Activated naive CD4-positive, alpha-beta T cell treated with anti-CD3 and anti-CD28 coated beads for 36 hours (primary cell): ENCODE measurements at regions of chr4 and their contacts with region 1.

Region 1: DNA sequence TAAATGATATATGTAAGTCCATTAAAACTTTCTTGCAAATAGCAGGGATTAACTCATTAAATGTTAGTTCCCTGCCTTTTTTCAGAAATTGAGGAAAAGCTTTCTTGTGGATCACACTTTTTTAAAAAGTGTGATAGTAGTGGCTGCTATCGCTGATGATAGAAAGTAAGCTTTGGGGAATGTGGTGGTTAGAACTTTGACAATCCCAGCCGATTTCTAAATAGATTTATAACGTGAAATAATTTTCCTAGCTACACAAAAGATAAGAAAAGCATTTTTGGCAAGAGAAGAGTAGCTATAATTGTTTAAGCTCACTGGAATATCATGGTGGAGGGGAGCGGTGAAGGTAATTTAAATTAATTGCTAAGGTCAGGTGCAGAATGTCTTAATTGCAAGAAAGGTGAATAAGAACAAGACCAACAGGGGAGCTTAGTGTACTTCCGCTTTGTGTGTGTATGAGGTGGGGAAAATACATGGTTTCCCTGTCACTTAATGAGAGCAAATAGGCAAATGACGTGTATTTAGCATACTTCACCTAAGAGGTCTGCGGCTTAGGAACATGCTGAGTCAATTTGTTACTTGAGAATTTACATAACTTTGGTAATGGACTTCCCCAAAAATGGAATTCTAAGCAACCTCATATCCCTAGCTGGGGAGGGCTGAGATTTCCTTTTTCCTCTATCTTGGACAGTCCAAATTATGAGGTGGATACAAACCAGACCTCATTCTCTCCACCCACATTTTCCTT is 11.7 kb upstream of the IL21 start:
- DNase-seq: no peak
- H3K4me3 Mint-ChIP-seq: no peak overlapping the region
- H3K27ac Mint-ChIP-seq: no peak overlapping the region
- H3K4me1 Mint-ChIP-seq: peaks cover 45% of the 10 kb centered on the region
- H3K27me3 Mint-ChIP-seq: peaks cover 2% of the 10 kb centered on the region

Region 2: GRCh38 chr4:122700178-122700725 is 67.7 kb after region 1 on chr4:
- CTCF ChIA-PET with region 1: no interaction called
- intact Hi-C with region 1: no loop called
- DNase-seq: no peak
- H3K4me3 Mint-ChIP-seq: peak overlapping the region; percentile 69
- H3K27ac Mint-ChIP-seq: peak overlapping the region; percentile 99
- H3K4me1 Mint-ChIP-seq: peaks cover 56% of the 10 kb centered on the region
- H3K27me3 Mint-ChIP-seq: peaks cover 4% of the 10 kb centered on the region

Region 3: DNA sequence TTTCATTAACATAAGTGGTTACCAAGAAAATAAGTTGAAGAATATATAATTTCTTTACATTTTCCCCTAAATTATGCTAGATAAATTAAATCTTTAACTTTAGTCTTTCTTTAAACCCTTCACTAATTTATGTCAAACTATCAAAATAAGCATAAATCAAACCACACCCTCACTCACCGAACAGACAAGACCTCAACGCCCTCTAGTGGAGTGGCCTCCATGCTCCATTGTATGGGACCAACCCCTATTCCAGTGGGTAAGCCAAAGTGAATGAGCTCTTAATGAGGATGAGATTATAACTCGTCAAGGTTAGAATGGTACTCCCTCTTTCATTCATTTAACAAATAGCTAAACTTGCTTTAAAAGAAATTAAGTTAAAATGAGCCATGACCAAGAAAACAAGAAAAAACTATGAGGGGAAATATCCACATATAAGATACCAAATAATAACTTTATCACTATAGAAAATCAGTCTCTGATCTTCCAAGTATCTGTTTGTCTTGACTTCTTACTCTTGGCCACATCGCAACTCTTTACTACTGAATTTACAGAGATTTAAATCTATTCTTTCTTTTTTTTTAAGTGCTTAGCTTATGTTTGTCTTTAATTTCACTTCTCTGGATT is 84.4 kb after region 1 on chr4:
- CTCF ChIA-PET with region 1: interaction called, 6 read pairs
- intact Hi-C with region 1: loop called (anchors 1 kb)
- DNase-seq: peak; percentile 94
- H3K4me3 Mint-ChIP-seq: no peak overlapping the region
- H3K27ac Mint-ChIP-seq: peak overlapping the region; percentile 65
- H3K4me1 Mint-ChIP-seq: peaks cover 41% of the 10 kb centered on the region
- H3K27me3 Mint-ChIP-seq: no peaks in the 10 kb centered on the region